ENCODE measurements at regions of chr11 and their contacts with region 1.

Region 1: DNA sequence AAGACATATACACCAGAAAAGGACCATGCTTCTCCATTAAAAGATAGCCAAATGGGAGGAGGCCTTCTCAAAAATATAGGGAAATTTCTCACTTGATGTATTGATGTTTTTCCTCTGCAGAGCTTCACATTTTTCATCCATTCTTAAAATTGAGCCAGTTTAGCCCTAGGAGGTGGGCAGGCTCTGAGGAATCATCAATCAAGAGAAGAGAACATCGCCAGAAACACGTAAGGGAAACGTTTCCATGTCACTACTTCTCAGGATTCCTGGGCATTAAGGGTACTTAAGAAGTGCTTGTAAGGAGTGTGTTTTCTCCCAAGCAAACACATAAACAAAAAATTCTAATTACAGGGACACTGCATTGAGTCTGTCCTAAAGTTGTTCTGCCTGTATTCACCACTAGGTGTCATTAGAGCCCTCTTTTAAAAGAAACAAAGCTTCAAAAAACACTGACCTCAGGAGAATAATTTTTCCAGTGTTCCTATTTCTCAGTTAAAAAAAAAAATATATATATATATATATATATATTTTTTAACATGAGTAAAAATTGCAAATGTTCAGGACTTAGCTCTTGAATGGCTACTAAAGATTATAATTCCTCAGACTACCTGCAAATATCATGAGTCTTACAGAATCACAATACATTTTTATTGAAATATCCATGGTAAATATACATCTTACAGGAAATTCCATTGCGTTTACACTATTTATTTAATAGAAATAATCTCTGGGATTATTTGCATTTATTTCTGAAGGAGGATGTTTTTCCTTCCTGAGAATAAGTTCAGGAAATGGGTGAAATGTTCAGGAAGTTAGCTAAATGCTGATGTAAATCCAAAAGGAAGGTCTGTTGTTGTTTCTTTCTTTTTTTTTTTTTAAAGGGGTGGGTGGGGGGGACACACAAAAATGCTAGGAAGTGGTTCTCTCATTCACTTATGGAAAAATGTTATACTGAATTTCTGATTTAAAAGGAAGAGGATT is 16.0 kb downstream of the FZD4 start:
- DNase-seq: no peak
- ATAC-seq: peak; percentile 81
- H3K4me3 ChIP-seq: no peak overlapping the region
- H3K27ac ChIP-seq: no peak overlapping the region
- H3K4me1 ChIP-seq: no peaks in the 10 kb centered on the region
- H3K27me3 ChIP-seq: no peaks in the 10 kb centered on the region; a peak in 1 of 4 replicates
- CTCF ChIP-seq: peak; percentile 51 to 66 (median 53); a peak in 5 of 6 replicates
- EP300 ChIP-seq: no peak
- POLR2A ChIP-seq: no peak
- RAD21 ChIP-seq: peak; percentile 75

Region 2: DNA sequence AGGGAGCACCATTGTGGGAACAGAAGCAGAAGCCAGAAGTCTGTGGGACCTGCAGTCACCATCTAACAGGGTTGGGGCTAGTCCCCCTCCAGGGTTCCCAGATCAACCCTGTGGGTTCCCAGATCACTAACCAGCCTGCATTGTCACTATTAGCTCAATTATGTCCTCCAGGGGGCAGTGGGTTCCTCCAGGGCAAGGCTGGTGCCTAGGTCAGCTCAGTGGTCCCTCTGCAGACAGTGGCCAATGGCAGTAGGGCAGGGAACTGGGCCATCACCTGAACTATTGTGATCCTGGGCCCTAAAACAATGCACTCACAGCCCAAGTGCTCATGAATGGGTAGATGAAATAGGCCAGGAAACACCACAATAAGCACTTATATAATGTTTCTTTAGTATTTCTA is 157.6 kb before region 1 on chr11:
- CTCF ChIA-PET with region 1: no interaction called
- POLR2A ChIA-PET with region 1: no interaction called
- RAD21 ChIA-PET with region 1: no interaction called
- SMC1A ChIA-PET with region 1: no interaction called
- in situ Hi-C with region 1: no loop called
- intact Hi-C with region 1: no loop called
- DNase-seq: no peak
- ATAC-seq: peak; percentile 46
- H3K4me3 ChIP-seq: no peak overlapping the region
- H3K27ac ChIP-seq: no peak overlapping the region
- H3K4me1 ChIP-seq: no peaks in the 10 kb centered on the region
- H3K27me3 ChIP-seq: no peaks in the 10 kb centered on the region
- CTCF ChIP-seq: no peak
- EP300 ChIP-seq: no peak
- POLR2A ChIP-seq: no peak
- RAD21 ChIP-seq: no peak

Region 3: DNA sequence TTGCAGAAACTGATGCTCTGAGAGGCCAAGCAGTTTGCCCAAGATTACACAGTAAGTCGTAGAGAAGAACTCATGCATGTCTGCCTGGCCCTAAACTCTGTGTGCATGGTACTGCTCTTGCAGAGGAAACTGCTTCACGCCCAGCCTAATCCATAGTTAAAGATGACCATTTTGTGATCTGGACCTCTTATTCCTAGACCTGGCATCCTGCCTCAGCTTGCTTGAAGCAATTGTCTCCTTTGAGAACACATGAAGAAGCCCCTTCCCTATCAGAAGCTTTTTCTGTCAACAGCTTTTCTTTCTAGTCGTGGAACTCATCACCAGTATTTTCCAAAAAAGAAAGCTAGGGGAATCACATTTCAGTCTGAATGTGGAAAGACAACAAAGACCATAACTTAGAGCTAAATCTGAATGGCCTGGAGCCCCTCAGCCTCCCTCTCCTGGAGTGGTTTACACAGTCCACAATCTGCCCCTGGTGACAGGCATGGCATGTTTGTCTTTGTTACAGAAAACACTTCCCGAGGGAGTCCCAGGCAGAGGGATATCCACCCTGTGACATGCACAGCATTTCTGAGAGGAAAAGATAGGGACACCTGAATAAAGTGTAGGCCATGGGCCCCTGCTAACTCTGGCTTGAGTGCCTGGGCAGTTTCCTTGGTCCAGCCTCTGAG is 18.9 kb after region 1 on chr11:
- CTCF ChIA-PET with region 1: interaction called, 10 read pairs
- POLR2A ChIA-PET with region 1: interaction called, 5 read pairs
- RAD21 ChIA-PET with region 1: interaction called, 6 read pairs
- SMC1A ChIA-PET with region 1: interaction called, 3 read pairs
- in situ Hi-C with region 1: no loop called
- intact Hi-C with region 1: no loop called
- DNase-seq: no peak
- ATAC-seq: no peak
- H3K4me3 ChIP-seq: no peak overlapping the region
- H3K27ac ChIP-seq: no peak overlapping the region
- H3K4me1 ChIP-seq: no peaks in the 10 kb centered on the region; the same call in 1 of the 2 replicates
- H3K27me3 ChIP-seq: peaks cover 3 to 11% of the 10 kb centered on the region in 2 experiments; a peak in 2 of 4 replicates
- CTCF ChIP-seq: no peak
- EP300 ChIP-seq: no peak
- POLR2A ChIP-seq: no peak
- RAD21 ChIP-seq: no peak

Region 4: GRCh38 chr11:87120937-87121336 is 181.7 kb after region 1 on chr11:
- CTCF ChIA-PET with region 1: no interaction called
- POLR2A ChIA-PET with region 1: no interaction called
- RAD21 ChIA-PET with region 1: no interaction called
- SMC1A ChIA-PET with region 1: no interaction called
- in situ Hi-C with region 1: no loop called
- intact Hi-C with region 1: no loop called
- DNase-seq: no peak
- ATAC-seq: no peak
- H3K4me3 ChIP-seq: no peak overlapping the region
- H3K27ac ChIP-seq: no peak overlapping the region
- H3K4me1 ChIP-seq: no peaks in the 10 kb centered on the region
- H3K27me3 ChIP-seq: no peaks in the 10 kb centered on the region
- CTCF ChIP-seq: no peak
- EP300 ChIP-seq: no peak
- POLR2A ChIP-seq: no peak
- RAD21 ChIP-seq: no peak

Region 5: DNA sequence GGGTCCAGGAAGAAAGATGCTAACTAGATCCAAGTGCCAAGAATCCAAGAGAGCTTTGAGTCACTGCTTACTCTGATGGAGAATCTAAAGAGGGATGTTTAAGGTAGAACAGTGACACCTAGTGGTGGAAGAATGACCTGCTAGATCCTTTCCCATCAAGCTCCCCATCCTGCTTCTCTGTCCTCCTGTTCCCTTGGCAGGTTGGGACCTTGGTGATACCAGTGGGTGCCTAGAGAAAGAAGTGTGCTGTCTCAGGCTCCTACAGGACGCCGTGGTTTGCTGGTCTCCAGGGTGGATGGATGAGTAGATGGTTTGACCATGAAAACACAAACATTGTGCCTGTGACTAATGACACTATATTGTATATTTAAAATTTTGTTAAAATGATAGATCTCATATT is 482.2 kb after region 1 on chr11:
- CTCF ChIA-PET with region 1: interaction called, 54 read pairs
- POLR2A ChIA-PET with region 1: no interaction called
- RAD21 ChIA-PET with region 1: interaction called, 10 read pairs
- SMC1A ChIA-PET with region 1: interaction called, 24 read pairs
- in situ Hi-C with region 1: loop called (anchors 5 kb)
- intact Hi-C with region 1: loop called (anchors 1 kb)
- DNase-seq: peak; percentile 27
- ATAC-seq: peak; percentile 95
- H3K4me3 ChIP-seq: no peak overlapping the region
- H3K27ac ChIP-seq: no peak overlapping the region
- H3K4me1 ChIP-seq: no peaks in the 10 kb centered on the region
- H3K27me3 ChIP-seq: no peaks in the 10 kb centered on the region
- CTCF ChIP-seq: peak; percentile 72 to 73 (median 73)
- EP300 ChIP-seq: no peak
- POLR2A ChIP-seq: no peak
- RAD21 ChIP-seq: peak; percentile 64

Measured in GM12878 (cell line).